ENCODE measurements at regions of chr12 and their contacts with region 1.

Region 1: DNA sequence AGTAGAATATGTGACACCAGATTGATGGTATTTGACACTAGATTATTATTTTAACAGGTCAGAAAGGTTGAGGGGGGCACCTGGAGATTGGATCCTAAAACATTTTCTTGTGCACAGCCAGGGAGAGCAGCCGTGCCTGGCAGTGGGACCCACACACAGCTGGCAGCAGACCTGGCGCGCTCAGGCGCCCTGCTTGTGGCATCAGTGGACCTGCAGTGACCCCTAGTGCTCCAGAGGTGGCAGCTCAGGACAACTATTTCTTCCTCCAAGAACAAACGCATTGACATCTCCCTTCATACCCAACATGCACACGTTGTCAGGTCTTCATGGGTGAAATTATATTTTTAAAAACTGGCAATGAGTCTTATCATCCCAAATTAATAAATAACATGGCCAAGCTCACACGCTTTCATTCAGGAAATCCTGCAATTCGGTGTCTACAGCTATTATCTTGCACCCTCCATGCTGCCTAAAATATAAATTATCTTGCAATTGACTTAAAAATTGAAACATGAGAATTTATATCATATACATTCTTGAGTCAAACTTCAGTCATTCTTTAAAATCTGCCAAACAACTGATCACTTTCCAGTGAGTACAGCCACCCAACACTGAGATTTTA is 7.7 kb upstream of the TMEM132D start:
- DNase-seq: no peak
- ATAC-seq: no peak
- H3K4me3 ChIP-seq: no peak overlapping the region
- H3K4me3 Mint-ChIP-seq: no peak overlapping the region
- H3K27ac ChIP-seq: no peak overlapping the region
- H3K27ac Mint-ChIP-seq: no peak overlapping the region
- H3K4me1 ChIP-seq: no peaks in the 10 kb centered on the region
- H3K4me1 Mint-ChIP-seq: no peaks in the 10 kb centered on the region
- H3K27me3 ChIP-seq: no peaks in the 10 kb centered on the region
- H3K27me3 Mint-ChIP-seq: peaks cover 0 to 50% (median 9%) of the 10 kb centered on the region in 5 donors

Region 2: GRCh38 chr12:128783129-128783574 is 1128.4 kb before region 1 on chr12:
- CTCF ChIA-PET with region 1: no interaction called
- POLR2A ChIA-PET with region 1: no interaction called
- intact Hi-C with region 1: loop called in 1 of 2 experiments (anchors 5 kb)
- DNase-seq: peak in 4 of 9 donors; percentile 6 to 28 (median 22)
- ATAC-seq: peak; percentile 86
- H3K4me3 ChIP-seq: no peak overlapping the region
- H3K4me3 Mint-ChIP-seq: peak overlapping the region; percentile 22 to 83 (median 68)
- H3K27ac ChIP-seq: no peak overlapping the region
- H3K27ac Mint-ChIP-seq: peak overlapping the region in 6 of 9 donors; percentile 33 to 92 (median 78)
- H3K4me1 ChIP-seq: no peaks in the 10 kb centered on the region
- H3K4me1 Mint-ChIP-seq: peaks cover 5 to 16% (median 9%) of the 10 kb centered on the region in 7 donors
- H3K27me3 ChIP-seq: no peaks in the 10 kb centered on the region
- H3K27me3 Mint-ChIP-seq: peaks cover 0 to 6% (median 0%) of the 10 kb centered on the region in 5 donors

Region 3: GRCh38 chr12:128969480-128970055 is 942.0 kb before region 1 on chr12:
- CTCF ChIA-PET with region 1: no interaction called
- POLR2A ChIA-PET with region 1: no interaction called
- intact Hi-C with region 1: loop called in 1 of 2 experiments (anchors 2 kb)
- DNase-seq: peak in 1 of 9 donors; percentile 42
- ATAC-seq: peak; percentile 63
- H3K4me3 ChIP-seq: no peak overlapping the region
- H3K4me3 Mint-ChIP-seq: peak overlapping the region in 5 of 10 donors; percentile 8 to 55 (median 19)
- H3K27ac ChIP-seq: no peak overlapping the region
- H3K27ac Mint-ChIP-seq: no peak overlapping the region
- H3K4me1 ChIP-seq: no peaks in the 10 kb centered on the region
- H3K4me1 Mint-ChIP-seq: peaks cover 4 to 7% (median 5%) of the 10 kb centered on the region in 7 donors
- H3K27me3 ChIP-seq: no peaks in the 10 kb centered on the region
- H3K27me3 Mint-ChIP-seq: peaks cover 13 to 44% (median 28%) of the 10 kb centered on the region in 5 donors

Region 4: GRCh38 chr12:129193263-129193871 is 718.2 kb before region 1 on chr12:
- CTCF ChIA-PET with region 1: no interaction called
- POLR2A ChIA-PET with region 1: no interaction called
- intact Hi-C with region 1: loop called in 1 of 2 experiments (anchors 5 kb)
- DNase-seq: no peak
- ATAC-seq: no peak
- H3K4me3 ChIP-seq: no peak overlapping the region
- H3K4me3 Mint-ChIP-seq: no peak overlapping the region
- H3K27ac ChIP-seq: no peak overlapping the region
- H3K27ac Mint-ChIP-seq: no peak overlapping the region
- H3K4me1 ChIP-seq: no peaks in the 10 kb centered on the region
- H3K4me1 Mint-ChIP-seq: no peaks in the 10 kb centered on the region
- H3K27me3 ChIP-seq: no peaks in the 10 kb centered on the region
- H3K27me3 Mint-ChIP-seq: peaks cover 0 to 12% (median 0%) of the 10 kb centered on the region in 5 donors